MCF 10A (cell line): ENCODE measurements at regions of chr20 and their contacts with region 1.

Region 1: DNA sequence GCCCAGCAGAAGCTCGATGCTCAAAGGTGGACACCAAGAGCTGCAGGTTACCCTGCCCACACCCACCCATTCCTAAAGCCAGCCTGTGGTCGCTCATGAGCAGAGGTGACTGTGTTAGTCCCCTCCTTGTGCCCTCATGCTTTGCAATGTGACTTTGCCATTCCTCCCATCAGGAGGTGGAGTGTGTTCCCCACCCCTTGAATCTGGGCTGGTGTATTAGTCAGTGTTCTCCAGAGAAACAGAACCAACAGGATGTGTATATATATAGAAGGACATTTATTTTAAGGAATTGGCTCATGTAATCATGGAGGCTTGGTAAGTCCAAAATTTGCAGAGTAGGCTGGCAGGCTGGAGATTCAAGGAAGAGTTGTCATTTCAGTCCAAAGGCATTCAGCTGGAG is 54.4 kb upstream of the RNF24 start:
- DNase-seq: peak; percentile 53
- H3K4me3 Mint-ChIP-seq: no peak overlapping the region
- H3K27ac Mint-ChIP-seq: no peak overlapping the region
- H3K4me1 Mint-ChIP-seq: peaks cover 55% of the 10 kb centered on the region
- H3K27me3 Mint-ChIP-seq: no peaks in the 10 kb centered on the region
- CTCF ChIP-seq: no peak

Region 2: GRCh38 chr20:4026093-4026601 is 43.6 kb before region 1 on chr20:
- CTCF ChIA-PET with region 1: interaction called, 11 read pairs
- POLR2A ChIA-PET with region 1: interaction called, 35 read pairs
- intact Hi-C with region 1: no loop called
- DNase-seq: peak; percentile 79
- H3K4me3 Mint-ChIP-seq: no peak overlapping the region
- H3K27ac Mint-ChIP-seq: peak overlapping the region; percentile 17
- H3K4me1 Mint-ChIP-seq: peaks cover 32% of the 10 kb centered on the region
- H3K27me3 Mint-ChIP-seq: no peaks in the 10 kb centered on the region
- CTCF ChIP-seq: peak; percentile 11

Region 3: DNA sequence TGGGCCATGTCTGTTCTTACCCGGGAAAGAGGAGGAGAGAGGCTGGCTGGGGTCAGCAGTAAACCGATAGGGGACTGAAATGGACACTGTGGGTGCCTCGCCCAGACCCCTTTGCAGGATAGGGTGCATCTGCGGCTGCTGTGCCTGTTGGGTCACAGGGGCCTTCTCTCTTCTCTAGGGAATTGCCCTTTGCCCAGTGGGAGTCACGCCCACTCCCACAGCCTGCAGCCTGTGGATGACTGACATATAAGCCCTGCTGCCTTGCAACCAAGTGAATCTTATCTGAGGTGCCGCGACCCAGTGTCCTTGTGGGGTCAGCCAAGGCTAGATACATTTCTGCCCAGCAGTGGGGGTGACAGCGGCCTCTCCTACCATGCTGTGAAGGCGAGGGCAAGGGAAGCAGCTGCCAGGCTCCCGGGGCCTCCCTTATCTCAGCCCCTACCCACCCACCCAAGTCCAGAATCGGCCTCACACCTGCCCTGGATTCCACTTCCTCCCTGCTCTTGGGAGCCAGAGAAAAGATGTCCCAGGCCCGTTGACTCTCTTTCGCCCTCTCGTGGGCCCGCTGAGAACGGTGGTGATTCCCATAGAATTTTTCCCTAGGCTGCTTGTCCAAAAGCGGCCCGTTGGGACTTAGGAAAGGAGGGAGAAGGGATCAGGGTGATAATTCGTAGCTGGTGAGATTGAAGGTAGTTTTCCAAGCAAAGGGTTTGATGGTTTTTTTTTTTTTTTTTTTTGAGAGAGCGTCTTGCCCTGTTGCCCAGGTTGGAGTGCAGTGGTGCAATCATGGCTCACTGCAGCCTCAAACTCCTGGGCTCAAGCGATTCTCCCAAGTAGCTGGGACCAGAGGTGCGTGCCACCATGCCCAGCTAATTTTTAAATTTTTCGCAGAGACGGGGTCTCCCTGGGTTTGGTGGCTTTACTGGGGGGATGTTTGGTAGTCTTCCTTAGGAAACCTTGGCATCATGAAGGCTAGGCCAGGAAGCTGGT is 22.0 kb after region 1 on chr20:
- CTCF ChIA-PET with region 1: interaction called, 13 read pairs
- POLR2A ChIA-PET with region 1: no interaction called
- intact Hi-C with region 1: no loop called
- DNase-seq: peak; percentile 65
- H3K4me3 Mint-ChIP-seq: no peak overlapping the region
- H3K27ac Mint-ChIP-seq: no peak overlapping the region
- H3K4me1 Mint-ChIP-seq: peaks cover 5% of the 10 kb centered on the region
- H3K27me3 Mint-ChIP-seq: no peaks in the 10 kb centered on the region
- CTCF ChIP-seq: peak; percentile 51